Activated CD8-positive, alpha-beta T cell treated with anti-CD3 and anti-CD28 coated beads for 36 hours (primary cell): ENCODE measurements at regions of chr6 and their contacts with region 1.

Region 1: DNA sequence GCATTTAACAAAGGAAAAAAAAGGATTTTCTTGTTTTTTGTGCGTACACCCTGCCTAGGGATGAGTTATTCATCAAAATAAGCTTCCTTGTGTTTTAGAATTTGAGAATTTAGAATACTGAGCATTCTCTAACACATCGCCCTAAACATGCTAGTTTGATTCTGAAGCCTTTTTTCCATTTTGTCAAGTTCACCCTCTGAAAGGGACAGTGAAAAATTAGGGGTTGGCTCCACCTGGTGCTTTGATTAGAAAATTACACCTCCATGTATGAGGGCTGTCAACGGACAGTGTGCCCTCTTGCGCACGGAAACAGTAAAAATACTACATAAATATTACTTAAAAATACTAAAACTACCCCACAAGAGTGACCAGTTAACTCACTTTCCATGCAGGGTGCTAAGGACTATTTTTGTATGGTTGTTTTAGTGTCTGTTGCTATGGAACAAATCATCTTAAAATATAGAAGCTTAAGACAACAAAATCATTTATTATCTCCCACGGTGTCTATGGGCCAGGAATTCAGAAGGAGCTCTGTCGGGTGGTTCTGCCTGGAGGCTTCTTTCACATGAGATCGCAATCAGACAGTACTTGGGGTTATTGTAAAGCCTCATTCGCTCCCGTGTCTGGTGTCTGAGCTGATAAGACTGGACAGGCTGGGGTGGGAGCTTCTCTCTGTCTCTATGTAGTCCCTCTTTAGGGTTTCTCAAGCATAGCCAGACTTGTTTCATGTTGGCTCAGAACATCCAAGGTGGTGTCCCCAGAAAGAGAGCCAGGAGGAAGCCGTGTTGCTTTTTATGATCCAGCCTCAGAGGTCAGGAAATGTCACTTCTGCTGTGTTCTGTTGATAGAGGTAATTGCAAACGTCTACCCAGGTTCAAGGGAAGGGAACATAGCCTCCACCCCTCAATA is 41.1 kb upstream of the TMEM170B start:
- DNase-seq: peak; percentile 78
- ATAC-seq: peak; percentile 97
- H3K4me3 Mint-ChIP-seq: no peak overlapping the region
- H3K27ac Mint-ChIP-seq: peak overlapping the region; percentile 32
- H3K4me1 Mint-ChIP-seq: peaks cover 12% of the 10 kb centered on the region
- H3K27me3 Mint-ChIP-seq: no peaks in the 10 kb centered on the region
- CTCF ChIP-seq: peak; percentile 98

Region 2: DNA sequence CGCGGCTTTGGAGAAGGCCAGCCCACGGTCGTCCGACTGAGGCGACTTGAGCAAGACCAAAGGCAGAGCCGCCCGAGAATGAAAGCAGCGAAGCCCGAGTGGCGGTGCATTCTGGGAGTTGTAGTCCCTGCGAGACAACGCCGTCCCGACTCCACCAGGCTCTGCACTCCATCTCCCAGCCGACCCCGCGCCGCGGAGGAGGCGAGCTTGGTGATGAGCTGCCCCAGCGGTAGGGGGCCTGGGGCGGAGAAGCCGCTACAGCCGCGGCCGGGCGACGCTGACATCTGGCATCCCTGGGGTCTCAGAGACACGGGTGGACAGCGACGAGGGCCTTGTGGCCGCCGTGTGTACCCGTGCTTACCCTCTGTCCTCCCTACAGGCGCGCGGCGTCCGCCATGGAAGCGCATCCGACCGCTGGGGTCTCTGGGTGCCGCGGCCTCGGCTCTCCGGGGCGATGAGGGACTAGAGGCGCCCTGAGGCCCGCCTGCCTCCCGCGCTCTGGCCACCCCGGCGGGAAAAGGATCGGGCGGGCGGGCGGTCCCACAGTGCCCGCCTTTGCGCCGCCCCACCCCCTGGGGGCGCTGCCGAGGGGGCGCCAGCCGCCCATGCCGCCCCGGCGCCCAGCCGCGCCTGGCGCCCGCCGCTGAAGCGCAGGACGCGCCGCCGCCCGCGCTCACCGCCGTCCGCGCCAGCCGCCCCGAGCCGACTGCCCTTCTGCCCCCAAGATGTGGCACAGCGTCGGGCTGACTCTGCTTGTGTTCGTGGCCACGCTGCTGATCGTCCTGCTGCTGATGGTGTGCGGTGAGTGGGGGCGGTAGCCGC is 402.6 kb before region 1 on chr6 and contains the start of gene SMIM13:
- CTCF ChIA-PET with region 1: interaction called, 10 read pairs
- POLR2A ChIA-PET with region 1: no interaction called
- intact Hi-C with region 1: no loop called
- DNase-seq: peak; percentile 98
- ATAC-seq: peak; percentile 94
- H3K4me3 Mint-ChIP-seq: peak within 1 kb of the TSS; percentile 89
- H3K27ac Mint-ChIP-seq: peak within 1 kb of the TSS; percentile 96
- H3K4me1 Mint-ChIP-seq: peaks cover 25% of the 10 kb centered on the region
- H3K27me3 Mint-ChIP-seq: no peaks in the 10 kb centered on the region
- CTCF ChIP-seq: peak; percentile 58
- total RNA-seq, gene SMIM13: 7.5 to 7.7 TPM

Region 3: DNA sequence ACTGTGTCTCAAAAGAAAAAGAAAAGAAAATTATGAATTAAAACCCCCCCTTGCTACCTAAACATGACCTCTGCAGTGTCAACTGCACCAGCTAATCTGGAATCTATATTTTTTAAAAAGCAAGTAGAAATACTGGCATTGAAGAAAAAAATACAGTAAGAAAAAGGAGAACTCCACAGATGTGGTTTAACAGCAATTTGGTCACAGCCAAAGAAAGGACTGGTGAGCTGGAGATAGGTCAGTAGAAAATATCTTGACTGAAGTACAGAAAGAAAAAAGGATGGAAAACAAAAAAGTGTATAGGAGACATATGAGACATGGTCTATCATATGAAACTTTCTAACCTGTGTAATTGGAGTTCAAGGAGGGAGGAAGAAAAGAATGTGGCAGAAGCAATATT is 340.8 kb before region 1 on chr6:
- CTCF ChIA-PET with region 1: interaction called, 18 read pairs
- POLR2A ChIA-PET with region 1: no interaction called
- intact Hi-C with region 1: no loop called
- DNase-seq: no peak
- ATAC-seq: no peak
- H3K4me3 Mint-ChIP-seq: no peak overlapping the region
- H3K27ac Mint-ChIP-seq: no peak overlapping the region
- H3K4me1 Mint-ChIP-seq: peaks cover 7% of the 10 kb centered on the region
- H3K27me3 Mint-ChIP-seq: peaks cover 6% of the 10 kb centered on the region
- CTCF ChIP-seq: no peak

Region 4: GRCh38 chr6:11232193-11232769 is 264.1 kb before region 1 on chr6 and contains the start of gene NEDD9:
- CTCF ChIA-PET with region 1: interaction called, 36 read pairs
- POLR2A ChIA-PET with region 1: no interaction called
- intact Hi-C with region 1: loop called (anchors 10 kb)
- DNase-seq: peak; percentile 98
- ATAC-seq: peak; percentile 96
- H3K4me3 Mint-ChIP-seq: peak within 1 kb of the TSS; percentile 84
- H3K27ac Mint-ChIP-seq: peak within 1 kb of the TSS; percentile 99
- H3K4me1 Mint-ChIP-seq: peaks cover 60% of the 10 kb centered on the region
- H3K27me3 Mint-ChIP-seq: no peaks in the 10 kb centered on the region
- CTCF ChIP-seq: no peak
- total RNA-seq, gene NEDD9: 26.6 to 29.7 TPM

Region 5: GRCh38 chr6:11414176-11414963 is 82.0 kb before region 1 on chr6:
- CTCF ChIA-PET with region 1: interaction called, 24 read pairs
- POLR2A ChIA-PET with region 1: no interaction called
- intact Hi-C with region 1: no loop called
- DNase-seq: peak; percentile 61
- ATAC-seq: peak; percentile 25
- H3K4me3 Mint-ChIP-seq: no peak overlapping the region
- H3K27ac Mint-ChIP-seq: no peak overlapping the region
- H3K4me1 Mint-ChIP-seq: peaks cover 40% of the 10 kb centered on the region
- H3K27me3 Mint-ChIP-seq: no peaks in the 10 kb centered on the region
- CTCF ChIP-seq: no peak

Region 6: GRCh38 chr6:11509471-11509870 is 13.1 kb after region 1 on chr6:
- CTCF ChIA-PET with region 1: interaction called, 20 read pairs
- POLR2A ChIA-PET with region 1: no interaction called
- intact Hi-C with region 1: no loop called
- DNase-seq: no peak
- ATAC-seq: no peak
- H3K4me3 Mint-ChIP-seq: no peak overlapping the region
- H3K27ac Mint-ChIP-seq: no peak overlapping the region
- H3K4me1 Mint-ChIP-seq: no peaks in the 10 kb centered on the region
- H3K27me3 Mint-ChIP-seq: peaks cover 8% of the 10 kb centered on the region
- CTCF ChIP-seq: no peak

Region 7: DNA sequence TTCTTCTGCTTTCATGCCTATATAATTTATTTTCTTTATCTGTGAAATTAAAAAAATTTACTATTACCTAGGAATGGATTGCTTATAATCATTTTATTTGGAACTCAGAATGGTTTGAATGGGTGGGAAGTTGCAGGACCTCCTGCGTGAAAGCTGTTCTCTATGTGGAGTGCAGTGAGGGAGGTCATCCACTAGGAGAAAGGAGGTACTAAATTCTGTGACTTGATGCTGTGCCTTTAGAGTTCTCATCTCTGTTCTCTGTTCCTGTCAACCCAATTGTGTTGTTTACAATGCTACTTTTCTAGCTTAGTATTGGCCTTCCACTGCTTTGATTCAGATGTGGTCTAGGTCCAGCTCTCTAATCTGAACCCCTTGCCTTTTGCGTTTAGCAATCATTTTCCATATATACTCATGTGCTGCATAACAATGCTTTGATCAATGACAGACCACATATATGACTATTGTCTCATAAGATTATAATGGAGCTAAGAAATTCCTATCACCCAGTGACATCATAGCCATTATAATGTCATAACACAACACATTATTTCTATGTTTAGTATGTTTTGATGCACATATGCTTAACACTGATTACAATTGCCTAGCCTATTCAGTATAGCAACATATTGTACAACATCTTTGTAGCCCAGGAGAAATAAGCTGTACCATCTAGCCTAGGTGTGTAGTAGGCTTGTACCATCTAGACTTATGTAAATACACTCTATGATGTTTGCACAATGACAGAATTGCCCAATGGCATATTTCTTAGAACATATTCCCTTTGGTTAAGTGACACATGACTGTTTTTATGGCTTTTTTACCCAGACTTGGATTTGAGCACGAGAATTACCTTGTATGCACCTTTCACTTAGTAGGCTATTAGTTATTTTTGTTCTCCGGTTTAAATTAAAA is 450.9 kb after region 1 on chr6:
- CTCF ChIA-PET with region 1: no interaction called
- POLR2A ChIA-PET with region 1: no interaction called
- intact Hi-C with region 1: no loop called
- DNase-seq: no peak
- ATAC-seq: no peak
- H3K4me3 Mint-ChIP-seq: no peak overlapping the region
- H3K27ac Mint-ChIP-seq: no peak overlapping the region
- H3K4me1 Mint-ChIP-seq: peaks cover 2% of the 10 kb centered on the region
- H3K27me3 Mint-ChIP-seq: no peaks in the 10 kb centered on the region
- CTCF ChIP-seq: peak; percentile 34